Activated CD8-positive, alpha-beta T cell treated with anti-CD3 and anti-CD28 coated beads for 36 hours (primary cell): ENCODE measurements at regions of chr4 and their contacts with region 1.

Region 1: GRCh38 chr4:8241895-8242696 is 27.5 kb upstream of the HTRA3 start:
- DNase-seq: peak; percentile 88
- ATAC-seq: peak; percentile 92
- H3K4me3 Mint-ChIP-seq: no peak overlapping the region
- H3K27ac Mint-ChIP-seq: no peak overlapping the region
- H3K4me1 Mint-ChIP-seq: peaks cover 7% of the 10 kb centered on the region
- H3K27me3 Mint-ChIP-seq: no peaks in the 10 kb centered on the region
- CTCF ChIP-seq: peak; percentile 94

Region 2: GRCh38 chr4:8144359-8144758 is 97.7 kb before region 1 on chr4:
- CTCF ChIA-PET with region 1: no interaction called
- POLR2A ChIA-PET with region 1: no interaction called
- intact Hi-C with region 1: no loop called
- DNase-seq: no peak
- ATAC-seq: no peak
- H3K4me3 Mint-ChIP-seq: no peak overlapping the region
- H3K27ac Mint-ChIP-seq: no peak overlapping the region
- H3K4me1 Mint-ChIP-seq: no peaks in the 10 kb centered on the region
- H3K27me3 Mint-ChIP-seq: peaks cover 5% of the 10 kb centered on the region
- CTCF ChIP-seq: no peak

Region 3: DNA sequence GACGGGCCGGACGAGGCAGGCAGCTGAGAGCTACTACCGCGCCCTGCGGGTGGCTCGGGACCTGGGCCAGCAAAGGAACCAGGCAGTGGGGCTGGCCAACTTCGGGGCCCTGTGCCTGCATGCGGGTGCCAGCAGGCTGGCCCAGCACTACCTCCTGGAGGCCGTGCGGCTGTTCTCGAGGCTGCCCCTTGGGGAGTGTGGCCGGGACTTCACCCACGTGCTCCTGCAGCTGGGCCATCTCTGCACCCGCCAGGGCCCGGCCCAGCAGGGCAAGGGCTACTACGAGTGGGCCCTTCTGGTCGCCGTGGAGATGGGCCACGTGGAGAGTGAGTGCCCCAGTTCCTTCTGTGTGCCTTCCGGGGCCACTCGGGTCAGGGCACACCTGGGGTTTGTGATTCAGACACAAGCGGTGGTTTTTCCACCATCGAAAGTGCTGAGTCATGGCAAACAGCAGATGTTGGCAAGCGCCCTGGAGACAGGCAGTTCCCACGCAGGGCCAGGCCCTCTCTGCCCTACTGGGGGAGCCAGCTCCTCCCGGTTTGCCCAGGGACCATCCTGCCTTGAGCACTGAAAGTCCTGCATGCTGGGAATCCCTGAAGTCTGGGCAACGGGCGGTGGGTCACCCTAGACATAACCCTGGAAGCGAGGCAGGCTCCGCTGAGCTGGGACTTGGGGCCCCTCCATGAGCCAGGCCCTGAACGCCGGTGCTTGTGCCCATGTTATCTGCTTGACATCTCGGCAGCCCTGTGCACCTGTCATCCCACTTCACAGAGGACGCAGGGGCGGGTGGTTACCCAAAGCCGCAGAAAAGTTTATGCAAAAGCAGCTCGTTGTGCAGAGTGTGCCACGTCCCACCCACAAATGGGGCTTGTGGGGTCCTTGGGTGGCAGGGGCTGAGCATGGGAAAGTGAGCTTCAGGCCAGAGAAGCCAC is 13.5 kb before region 1 on chr4:
- CTCF ChIA-PET with region 1: interaction called, 12 read pairs
- POLR2A ChIA-PET with region 1: interaction called, 4 read pairs
- intact Hi-C with region 1: no loop called
- DNase-seq: peak; percentile 95
- ATAC-seq: peak; percentile 79
- H3K4me3 Mint-ChIP-seq: peak overlapping the region; percentile 15
- H3K27ac Mint-ChIP-seq: peak overlapping the region; percentile 81
- H3K4me1 Mint-ChIP-seq: peaks cover 51% of the 10 kb centered on the region
- H3K27me3 Mint-ChIP-seq: no peaks in the 10 kb centered on the region
- CTCF ChIP-seq: no peak

Region 4: GRCh38 chr4:8267077-8267476 is 25.0 kb after region 1 on chr4:
- CTCF ChIA-PET with region 1: interaction called, 12 read pairs
- POLR2A ChIA-PET with region 1: no interaction called
- intact Hi-C with region 1: no loop called
- DNase-seq: peak; percentile 69
- ATAC-seq: peak; percentile 88
- H3K4me3 Mint-ChIP-seq: no peak overlapping the region
- H3K27ac Mint-ChIP-seq: no peak overlapping the region
- H3K4me1 Mint-ChIP-seq: no peaks in the 10 kb centered on the region
- H3K27me3 Mint-ChIP-seq: peaks cover 22% of the 10 kb centered on the region
- CTCF ChIP-seq: peak; percentile 51

Region 5: DNA sequence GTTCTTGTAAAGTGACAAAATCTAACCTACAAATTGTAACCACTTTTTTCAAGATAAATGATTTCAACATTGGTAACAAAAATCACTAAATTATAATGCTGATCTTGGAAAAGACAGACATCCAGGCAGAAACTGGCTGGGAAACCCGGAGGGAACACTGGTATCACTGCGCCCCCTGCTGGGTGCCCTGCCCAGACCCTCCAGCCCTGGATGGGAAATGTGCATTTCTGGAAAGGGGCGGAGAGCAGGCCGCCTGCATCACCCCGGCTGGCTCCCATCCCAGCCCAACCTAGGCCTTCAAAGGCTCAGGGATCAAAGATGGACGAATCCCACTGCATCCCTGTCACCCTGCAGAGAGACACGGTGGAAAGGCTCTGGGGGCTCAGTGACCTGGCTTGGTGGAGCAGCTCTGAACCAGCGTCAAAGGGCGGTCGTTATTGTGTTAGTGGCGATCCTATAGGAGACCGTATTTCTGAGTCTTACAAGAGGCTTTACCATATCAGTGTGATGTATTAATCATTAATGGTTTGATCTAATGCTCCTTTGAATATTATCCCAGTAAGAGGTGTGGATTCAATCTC is 161.2 kb after region 1 on chr4:
- CTCF ChIA-PET with region 1: interaction called, 22 read pairs
- POLR2A ChIA-PET with region 1: interaction called, 3 read pairs
- intact Hi-C with region 1: loop called (anchors 5 kb)
- DNase-seq: peak; percentile 63
- ATAC-seq: peak; percentile 67
- H3K4me3 Mint-ChIP-seq: no peak overlapping the region
- H3K27ac Mint-ChIP-seq: no peak overlapping the region
- H3K4me1 Mint-ChIP-seq: no peaks in the 10 kb centered on the region
- H3K27me3 Mint-ChIP-seq: no peaks in the 10 kb centered on the region
- CTCF ChIP-seq: peak; percentile 79

Region 6: GRCh38 chr4:8409264-8410065 is 167.4 kb after region 1 on chr4:
- CTCF ChIA-PET with region 1: interaction called, 10 read pairs
- POLR2A ChIA-PET with region 1: no interaction called
- intact Hi-C with region 1: loop called (anchors 5 kb)
- DNase-seq: peak; percentile 58
- ATAC-seq: peak; percentile 82
- H3K4me3 Mint-ChIP-seq: no peak overlapping the region
- H3K27ac Mint-ChIP-seq: no peak overlapping the region
- H3K4me1 Mint-ChIP-seq: peaks cover 16% of the 10 kb centered on the region
- H3K27me3 Mint-ChIP-seq: no peaks in the 10 kb centered on the region
- CTCF ChIP-seq: no peak